ENCODE measurements at regions of chr11 and their contacts with region 1.

Region 1: GRCh38 chr11:3412837-3413236 is 33.9 kb upstream of the ZNF195 start:
- DNase-seq: no peak
- H3K4me3 Mint-ChIP-seq: no peak overlapping the region
- H3K27ac Mint-ChIP-seq: no peak overlapping the region
- H3K4me1 Mint-ChIP-seq: peaks cover 17% of the 10 kb centered on the region
- H3K27me3 Mint-ChIP-seq: peaks cover 10% of the 10 kb centered on the region
- CTCF ChIP-seq: no peak

Region 2: DNA sequence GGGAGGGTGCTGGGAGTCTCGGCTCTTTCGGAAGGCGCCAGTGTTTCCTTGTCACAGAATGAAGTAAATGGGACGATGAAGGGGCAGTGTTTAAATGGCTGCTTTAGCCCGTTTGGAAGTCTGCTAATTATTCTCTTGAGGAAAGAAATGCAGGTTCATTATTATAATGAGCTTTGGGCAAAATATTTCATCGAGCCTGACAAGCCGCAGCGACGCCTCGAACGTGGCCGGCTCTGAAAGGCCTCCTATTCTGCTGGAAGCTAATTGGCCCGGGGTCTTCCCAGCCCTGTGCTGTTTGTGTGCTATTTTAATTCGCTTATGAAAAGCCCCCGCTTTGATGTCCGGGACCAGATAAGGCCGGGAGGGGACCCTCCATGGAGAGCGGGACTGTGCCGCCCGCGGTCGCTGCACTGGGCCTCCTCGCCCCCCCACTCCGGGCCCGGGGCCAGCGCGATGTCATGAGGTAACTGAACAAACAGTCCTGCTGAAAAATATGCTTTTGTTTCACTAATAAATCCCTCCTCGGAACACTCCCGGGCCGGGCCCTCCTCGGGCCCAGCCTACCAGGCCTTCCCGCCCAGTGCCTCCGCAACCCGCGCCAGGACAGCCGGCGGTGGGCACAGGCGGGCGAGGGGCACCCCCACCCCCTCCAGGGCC is 605.7 kb before region 1 on chr11:
- CTCF ChIA-PET with region 1: no interaction called
- POLR2A ChIA-PET with region 1: no interaction called
- intact Hi-C with region 1: no loop called
- DNase-seq: no peak
- H3K4me3 Mint-ChIP-seq: no peak overlapping the region
- H3K27ac Mint-ChIP-seq: no peak overlapping the region
- H3K4me1 Mint-ChIP-seq: no peaks in the 10 kb centered on the region
- H3K27me3 Mint-ChIP-seq: peaks cover 26% of the 10 kb centered on the region
- CTCF ChIP-seq: no peak

Region 3: GRCh38 chr11:3188496-3189195 is 224.2 kb before region 1 on chr11:
- CTCF ChIA-PET with region 1: no interaction called
- POLR2A ChIA-PET with region 1: no interaction called
- intact Hi-C with region 1: no loop called
- DNase-seq: no peak
- H3K4me3 Mint-ChIP-seq: no peak overlapping the region
- H3K27ac Mint-ChIP-seq: no peak overlapping the region
- H3K4me1 Mint-ChIP-seq: no peaks in the 10 kb centered on the region
- H3K27me3 Mint-ChIP-seq: peaks cover 17% of the 10 kb centered on the region
- CTCF ChIP-seq: no peak

Region 4: GRCh38 chr11:3200388-3201111 is 212.3 kb before region 1 on chr11:
- CTCF ChIA-PET with region 1: no interaction called
- POLR2A ChIA-PET with region 1: no interaction called
- intact Hi-C with region 1: no loop called
- DNase-seq: no peak
- H3K4me3 Mint-ChIP-seq: no peak overlapping the region
- H3K27ac Mint-ChIP-seq: no peak overlapping the region
- H3K4me1 Mint-ChIP-seq: no peaks in the 10 kb centered on the region
- H3K27me3 Mint-ChIP-seq: peaks cover 36% of the 10 kb centered on the region
- CTCF ChIP-seq: no peak

Region 5: DNA sequence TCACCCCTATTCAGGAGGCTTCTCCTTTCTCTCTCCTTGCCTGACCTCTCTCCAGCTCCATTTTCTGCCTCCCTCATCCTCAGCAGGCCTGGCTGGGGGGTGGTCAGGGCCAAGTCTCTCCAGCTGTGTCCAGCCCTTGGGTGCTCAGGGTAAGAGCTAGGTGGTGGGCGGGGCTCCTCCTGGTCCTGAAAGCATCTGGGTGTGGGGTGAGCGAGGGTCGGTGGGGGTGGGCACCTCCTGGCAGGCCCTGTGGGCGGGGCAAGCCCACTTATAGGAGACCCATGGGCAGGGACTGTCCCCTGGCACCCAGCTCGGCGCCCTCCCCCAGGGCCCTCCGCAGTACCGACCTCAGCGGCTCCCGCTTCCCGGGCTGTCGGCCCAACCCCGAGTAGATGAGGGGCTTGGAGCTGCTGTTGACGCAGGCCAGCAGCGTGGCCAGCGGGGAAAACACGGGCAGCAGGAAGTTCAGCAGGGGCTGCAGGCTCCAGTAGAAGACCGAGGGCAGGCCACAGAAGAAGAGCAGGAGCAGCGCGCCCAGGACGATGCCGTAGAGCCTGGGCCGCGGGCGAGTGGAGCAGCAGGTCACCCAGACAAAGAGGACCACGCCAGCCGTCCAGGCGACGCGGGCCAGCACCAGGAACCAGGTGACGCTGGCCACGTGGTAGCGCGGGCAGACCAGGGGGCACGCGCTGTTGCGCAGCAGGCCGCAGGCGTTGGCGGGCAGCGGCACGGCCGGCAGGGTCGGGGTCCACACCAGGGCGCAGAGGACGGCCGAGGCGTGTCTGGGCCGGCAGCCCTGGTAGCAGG is 195.0 kb before region 1 on chr11:
- CTCF ChIA-PET with region 1: interaction called, 9 read pairs
- POLR2A ChIA-PET with region 1: no interaction called
- intact Hi-C with region 1: loop called (anchors 10 kb)
- DNase-seq: no peak
- H3K4me3 Mint-ChIP-seq: no peak overlapping the region
- H3K27ac Mint-ChIP-seq: no peak overlapping the region
- H3K4me1 Mint-ChIP-seq: peaks cover 18% of the 10 kb centered on the region
- H3K27me3 Mint-ChIP-seq: peaks cover 91% of the 10 kb centered on the region
- CTCF ChIP-seq: no peak

Region 6: GRCh38 chr11:3341298-3341697 is 71.5 kb before region 1 on chr11:
- CTCF ChIA-PET with region 1: interaction called, 12 read pairs
- POLR2A ChIA-PET with region 1: no interaction called
- intact Hi-C with region 1: no loop called
- DNase-seq: peak; percentile 72
- H3K4me3 Mint-ChIP-seq: no peak overlapping the region
- H3K27ac Mint-ChIP-seq: no peak overlapping the region
- H3K4me1 Mint-ChIP-seq: peaks cover 18% of the 10 kb centered on the region
- H3K27me3 Mint-ChIP-seq: peaks cover 49% of the 10 kb centered on the region
- CTCF ChIP-seq: peak; percentile 46

Region 7: GRCh38 chr11:3378426-3379423 is 34.1 kb before region 1 on chr11 and contains the start of gene ZNF195:
- CTCF ChIA-PET with region 1: interaction called, 14 read pairs
- POLR2A ChIA-PET with region 1: interaction called, 10 read pairs
- intact Hi-C with region 1: no loop called
- DNase-seq: peak; percentile 99
- H3K4me3 Mint-ChIP-seq: peak within 1 kb of the TSS; percentile 99
- H3K27ac Mint-ChIP-seq: peak within 1 kb of the TSS; percentile 98
- H3K4me1 Mint-ChIP-seq: peaks cover 7% of the 10 kb centered on the region
- H3K27me3 Mint-ChIP-seq: no peaks in the 10 kb centered on the region
- CTCF ChIP-seq: no peak
- total RNA-seq, gene ZNF195: 29.1 and 42.5 TPM in 2 replicates